ENCODE measurements at regions of chr1 and their contacts with region 1.

Region 1: DNA sequence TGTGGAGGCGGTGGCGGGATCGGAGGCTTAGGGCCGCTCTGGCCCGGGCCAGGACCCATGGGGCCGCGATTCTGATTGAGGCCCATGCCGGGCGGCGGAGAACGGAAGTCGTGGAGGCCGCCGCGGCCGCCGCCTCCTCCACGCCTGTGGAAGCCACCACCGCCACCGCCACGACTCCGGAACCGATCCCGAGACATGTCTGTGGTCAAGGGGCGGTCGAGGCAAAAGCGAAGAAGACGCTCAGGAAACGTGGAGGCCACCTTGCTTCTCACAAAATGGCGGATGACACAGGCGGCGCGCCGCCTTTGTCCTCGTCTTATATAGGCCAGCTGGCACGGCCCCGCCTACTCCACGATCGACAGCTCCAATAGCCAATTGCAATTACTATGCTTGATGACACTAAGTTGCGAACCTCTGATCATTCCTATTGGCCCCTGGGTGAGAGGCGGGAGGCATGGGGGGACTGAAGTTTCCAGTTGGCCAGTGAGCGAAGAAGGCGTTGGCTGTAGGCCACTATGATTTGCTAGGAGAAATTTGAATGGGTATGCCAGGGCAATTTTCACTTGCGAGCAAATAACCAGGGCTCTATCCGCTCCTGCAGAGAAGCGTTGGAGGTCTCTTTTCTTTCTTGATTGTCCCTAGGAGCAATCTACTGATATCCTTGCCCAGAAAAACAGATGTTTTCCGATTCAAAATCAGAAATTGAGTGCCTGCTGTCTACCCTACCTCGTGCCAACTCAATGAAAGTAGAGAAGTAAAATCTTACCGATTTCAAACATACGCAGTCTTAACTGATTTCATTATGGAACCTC is at the start of gene SFPQ:
- DNase-seq: peak; percentile 99
- H3K4me3 ChIP-seq: peak within 1 kb of the TSS; percentile 54 to 99 (median 97)
- H3K27ac ChIP-seq: peak within 1 kb of the TSS; percentile 62
- H3K4me1 ChIP-seq: peaks cover 25% of the 10 kb centered on the region
- H3K27me3 ChIP-seq: no peaks in the 10 kb centered on the region
- CTCF ChIP-seq: no peak
- POLR2A ChIP-seq: peak; percentile 100
- total RNA-seq, gene SFPQ: 413 and 415 TPM in 2 replicates

Region 2: GRCh38 chr1:34786521-34787325 is 406.3 kb before region 1 on chr1:
- CTCF ChIA-PET with region 1: no interaction called
- POLR2A ChIA-PET with region 1: no interaction called
- dilution Hi-C with region 1: no loop called
- intact Hi-C with region 1: loop called (anchors 5 kb)
- DNase-seq: peak; percentile 79
- H3K4me3 ChIP-seq: no peak overlapping the region
- H3K27ac ChIP-seq: no peak overlapping the region
- H3K4me1 ChIP-seq: no peaks in the 10 kb centered on the region
- H3K27me3 ChIP-seq: peaks cover 18 to 19% of the 10 kb centered on the region in 2 experiments
- CTCF ChIP-seq: peak; percentile 74 to 89
- POLR2A ChIP-seq: no peak

Region 3: GRCh38 chr1:35030756-35031446 is 162.2 kb before region 1 on chr1:
- CTCF ChIA-PET with region 1: no interaction called
- POLR2A ChIA-PET with region 1: no interaction called
- dilution Hi-C with region 1: no loop called
- intact Hi-C with region 1: loop called (anchors 5 kb)
- DNase-seq: peak; percentile 73
- H3K4me3 ChIP-seq: peak overlapping the region; percentile 79 to 96 (median 85)
- H3K27ac ChIP-seq: peak overlapping the region; percentile 69
- H3K4me1 ChIP-seq: peaks cover 9% of the 10 kb centered on the region
- H3K27me3 ChIP-seq: no peaks in the 10 kb centered on the region
- CTCF ChIP-seq: no peak
- POLR2A ChIP-seq: no peak

Region 4: GRCh38 chr1:35268282-35269200 is 75.5 kb after region 1 on chr1 and contains the start of gene ZMYM4:
- CTCF ChIA-PET with region 1: no interaction called
- POLR2A ChIA-PET with region 1: no interaction called
- dilution Hi-C with region 1: no loop called
- intact Hi-C with region 1: loop called (anchors 2 kb)
- DNase-seq: peak; percentile 98
- H3K4me3 ChIP-seq: peak within 1 kb of the TSS; percentile 61 to 99 (median 84)
- H3K27ac ChIP-seq: peak within 1 kb of the TSS; percentile 47
- H3K4me1 ChIP-seq: peaks cover 5% of the 10 kb centered on the region
- H3K27me3 ChIP-seq: peaks cover 0 to 2% of the 10 kb centered on the region in 2 experiments
- CTCF ChIP-seq: no peak
- POLR2A ChIP-seq: no peak
- total RNA-seq, gene ZMYM4: 61.2 and 65.0 TPM in 2 replicates

Region 5: DNA sequence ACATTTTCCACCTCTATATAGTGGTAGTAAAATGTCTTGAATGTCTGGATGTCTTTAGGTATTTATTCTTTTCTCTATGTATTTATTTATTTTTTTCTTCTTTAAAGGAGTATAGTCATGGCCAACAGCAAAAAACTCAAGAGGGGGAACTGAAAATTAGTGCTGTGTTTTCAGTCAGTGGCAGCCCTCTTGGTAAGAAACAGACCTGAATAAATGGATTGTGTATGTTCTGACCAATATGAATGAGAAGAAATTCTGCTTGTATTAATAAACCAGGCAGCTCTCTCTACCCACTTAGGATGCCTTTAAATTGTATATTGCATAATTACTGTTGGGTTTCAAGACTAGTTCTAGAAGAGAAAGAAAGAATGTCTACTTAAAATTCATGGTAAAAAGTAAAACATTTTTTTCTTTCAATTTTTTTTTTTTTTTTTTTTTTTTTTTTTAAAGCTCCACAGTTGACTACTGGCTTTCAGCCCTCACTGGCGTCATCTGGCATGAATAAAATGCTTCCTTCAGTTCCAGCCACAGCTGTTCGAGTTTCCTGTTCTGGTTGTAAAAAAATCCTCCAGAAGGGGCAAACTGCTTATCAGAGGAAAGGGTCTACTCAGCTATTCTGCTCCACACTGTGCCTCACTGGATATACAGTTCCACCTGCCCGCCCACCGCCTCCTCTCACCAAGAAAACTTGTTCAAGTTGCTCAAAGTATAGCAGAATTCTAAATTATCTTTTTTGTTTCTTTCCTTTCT is 177.0 kb after region 1 on chr1:
- CTCF ChIA-PET with region 1: no interaction called
- POLR2A ChIA-PET with region 1: interaction called, 12 read pairs
- dilution Hi-C with region 1: no loop called
- intact Hi-C with region 1: no loop called
- DNase-seq: peak; percentile 94
- H3K4me3 ChIP-seq: no peak overlapping the region
- H3K27ac ChIP-seq: peak overlapping the region; percentile 43
- H3K4me1 ChIP-seq: peaks cover 12% of the 10 kb centered on the region
- H3K27me3 ChIP-seq: no peaks in the 10 kb centered on the region
- CTCF ChIP-seq: no peak
- POLR2A ChIP-seq: no peak

Region 6: GRCh38 chr1:35715568-35716002 is 522.5 kb after region 1 on chr1:
- CTCF ChIA-PET with region 1: no interaction called
- POLR2A ChIA-PET with region 1: no interaction called
- dilution Hi-C with region 1: no loop called
- intact Hi-C with region 1: loop called (anchors 5 kb)
- DNase-seq: peak; percentile 65
- H3K4me3 ChIP-seq: no peak overlapping the region
- H3K27ac ChIP-seq: no peak overlapping the region
- H3K4me1 ChIP-seq: peaks cover 13% of the 10 kb centered on the region
- H3K27me3 ChIP-seq: no peaks in the 10 kb centered on the region
- CTCF ChIP-seq: peak; percentile 85 to 89
- POLR2A ChIP-seq: no peak

Region 7: GRCh38 chr1:36516372-36517325 is 1323.6 kb after region 1 on chr1:
- CTCF ChIA-PET with region 1: no interaction called
- POLR2A ChIA-PET with region 1: no interaction called
- dilution Hi-C with region 1: no loop called
- intact Hi-C with region 1: no loop called
- DNase-seq: peak; percentile 43
- H3K4me3 ChIP-seq: no peak overlapping the region
- H3K27ac ChIP-seq: no peak overlapping the region
- H3K4me1 ChIP-seq: no peaks in the 10 kb centered on the region
- H3K27me3 ChIP-seq: peaks cover 0 to 1% of the 10 kb centered on the region in 2 experiments
- CTCF ChIP-seq: peak; percentile 85 to 90
- POLR2A ChIP-seq: no peak